Right lobe of liver (tissue), 6 donors: ENCODE measurements at regions of chr3 and their contacts with region 1.

Region 1: DNA sequence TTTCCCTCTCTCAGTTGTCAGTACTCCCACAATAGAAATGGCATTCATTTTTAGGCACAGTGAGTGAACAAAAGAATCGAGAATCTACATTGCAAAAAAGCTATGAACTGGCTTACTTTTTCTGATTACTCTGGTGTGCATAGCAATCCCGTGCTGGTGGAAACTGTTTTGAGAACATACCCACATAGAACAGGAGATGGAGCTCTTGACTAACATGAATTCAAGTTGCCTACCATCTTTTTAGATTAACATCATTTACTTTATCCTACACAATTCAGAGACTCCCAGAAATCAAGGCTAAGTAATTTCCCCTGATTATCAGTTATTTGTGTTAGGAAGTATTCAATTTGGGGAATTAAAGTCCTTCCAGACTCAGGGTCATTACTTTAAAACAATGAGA is 326.6 kb downstream of the ARPP21 start:
- DNase-seq: no peak
- ATAC-seq: peak; percentile 56 to 73 (median 63)
- H3K4me3 ChIP-seq: no peak overlapping the region
- H3K27ac ChIP-seq: no peak overlapping the region
- H3K4me1 ChIP-seq: no peaks in the 10 kb centered on the region
- H3K27me3 ChIP-seq: no peaks in the 10 kb centered on the region
- CTCF ChIP-seq: peak; percentile 45 to 55 (median 48)
- POLR2A ChIP-seq: no peak

Region 2: DNA sequence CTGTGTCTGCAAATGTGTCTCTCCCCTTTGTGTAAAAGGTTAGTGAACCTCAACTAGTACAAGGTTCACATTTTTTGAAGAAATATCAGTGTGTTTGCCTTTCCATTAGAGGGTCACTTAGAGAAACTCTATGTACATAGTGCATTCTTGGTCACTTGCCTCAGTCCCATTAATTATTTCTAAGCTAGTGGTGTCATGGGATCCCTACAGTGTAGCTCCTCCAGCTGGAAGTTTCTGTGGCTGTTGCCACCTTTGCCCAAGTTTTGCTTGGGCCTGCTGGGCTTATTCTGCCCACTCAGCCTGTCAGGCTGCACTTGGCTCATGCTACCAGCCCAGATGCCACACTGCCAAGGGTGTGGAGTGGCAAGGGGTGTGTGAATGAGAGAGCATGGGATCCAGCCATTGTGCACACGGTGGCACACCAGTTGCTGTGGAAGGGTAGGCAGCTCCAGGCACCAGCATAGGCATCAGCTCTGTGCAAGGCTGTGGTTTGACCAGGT is 164.9 kb before region 1 on chr3:
- intact Hi-C with region 1: no loop called
- DNase-seq: peak; percentile 52 to 72 (median 72)
- ATAC-seq: peak; percentile 93 to 97 (median 94)
- H3K4me3 ChIP-seq: no peak overlapping the region
- H3K27ac ChIP-seq: peak overlapping the region; percentile 76 to 80 (median 78)
- H3K4me1 ChIP-seq: peaks cover 0 to 16% (median 5%) of the 10 kb centered on the region in 4 donors
- H3K27me3 ChIP-seq: no peaks in the 10 kb centered on the region
- CTCF ChIP-seq: peak in 3 of 4 donors; percentile 5 to 17 (median 12)
- POLR2A ChIP-seq: no peak

Region 3: DNA sequence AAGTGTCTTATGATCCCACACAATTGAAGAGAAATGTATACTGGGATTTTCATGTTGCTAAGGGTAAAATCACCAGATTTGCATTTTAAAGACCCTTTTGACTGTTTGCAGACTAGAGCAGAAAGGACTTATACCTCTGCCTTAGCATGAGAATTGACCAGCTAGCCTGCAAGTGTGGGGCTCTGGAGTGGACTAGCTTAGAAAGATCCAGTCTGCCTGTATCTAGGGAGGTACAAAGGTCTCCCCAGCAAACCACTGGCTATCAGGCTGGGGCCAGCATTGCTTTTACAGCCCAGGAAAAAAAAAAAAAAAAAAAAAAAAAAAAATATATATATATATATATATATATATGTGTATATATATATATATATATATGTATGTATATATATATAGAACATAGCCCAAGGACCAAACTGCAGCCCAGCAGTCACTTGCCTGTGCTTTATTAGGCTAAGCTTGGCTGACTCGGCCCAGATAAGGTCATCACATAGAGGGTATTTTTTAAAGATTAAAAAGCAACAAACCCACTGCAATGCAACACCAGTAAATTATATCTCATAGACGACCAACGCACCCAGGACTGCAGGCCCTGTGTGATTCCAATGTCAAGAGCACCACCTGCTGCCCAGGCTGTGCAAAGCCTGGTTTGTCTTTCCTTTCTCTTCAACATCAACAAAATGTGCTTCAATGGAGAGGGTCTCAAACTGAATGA is 734.8 kb after region 1 on chr3:
- intact Hi-C with region 1: loop called in 1 of 2 experiments (anchors 10 kb)
- DNase-seq: peak; percentile 50 to 60 (median 52)
- ATAC-seq: peak; percentile 87 to 96 (median 90)
- H3K4me3 ChIP-seq: no peak overlapping the region
- H3K27ac ChIP-seq: no peak overlapping the region
- H3K4me1 ChIP-seq: no peaks in the 10 kb centered on the region
- H3K27me3 ChIP-seq: no peaks in the 10 kb centered on the region
- CTCF ChIP-seq: peak; percentile 65 to 82 (median 80)
- POLR2A ChIP-seq: no peak